ENCODE measurements at regions of chr17 and their contacts with region 1.

Region 1: DNA sequence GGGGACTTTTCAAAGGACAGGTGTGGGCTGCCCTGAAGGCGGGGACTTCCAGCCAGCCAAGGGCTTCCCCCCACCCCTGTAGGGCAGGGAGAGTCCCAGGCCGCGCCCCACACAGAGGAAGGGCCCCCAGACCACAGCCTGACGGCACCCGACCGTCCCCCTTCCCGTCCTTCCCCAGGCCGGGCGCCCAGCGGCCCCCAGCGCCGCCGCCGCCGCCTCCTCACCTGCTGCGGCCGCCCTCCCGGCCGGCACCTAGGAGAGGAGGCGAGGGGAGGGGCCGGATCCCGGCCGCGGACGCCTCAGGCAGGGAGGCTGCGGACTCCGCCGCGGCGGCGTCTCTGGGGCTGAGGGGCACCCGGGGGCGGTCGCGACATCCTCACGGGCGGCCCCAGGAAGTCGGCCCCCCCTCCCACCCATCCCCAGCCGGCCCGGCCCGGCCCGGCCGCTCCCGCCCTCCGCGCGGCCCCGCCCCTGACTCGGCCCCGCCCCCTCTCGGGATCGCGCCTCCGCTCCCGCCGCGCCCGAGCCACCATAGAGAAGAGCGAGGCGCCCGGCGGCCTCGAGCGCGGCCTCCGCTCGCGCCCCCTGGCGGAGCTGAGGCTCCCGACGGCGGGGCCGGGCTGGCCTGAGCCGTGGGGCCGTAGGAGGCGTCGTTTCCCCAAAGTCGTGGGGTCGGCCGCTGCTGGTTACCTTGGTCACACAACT is 25.5 kb upstream of the RFFL start:
- DNase-seq: peak; percentile 80 to 96 (median 89)
- ATAC-seq: peak; percentile 74
- H3K4me3 ChIP-seq: peak overlapping the region; percentile 92
- H3K4me3 Mint-ChIP-seq: peak overlapping the region; percentile 99
- H3K27ac ChIP-seq: peak overlapping the region; percentile 88 to 94
- H3K27ac Mint-ChIP-seq: peak overlapping the region; percentile 98
- H3K4me1 ChIP-seq: peaks cover 46% of the 10 kb centered on the region
- H3K4me1 Mint-ChIP-seq: peaks cover 58% of the 10 kb centered on the region
- H3K27me3 ChIP-seq: no peaks in the 10 kb centered on the region
- H3K27me3 Mint-ChIP-seq: no peaks in the 10 kb centered on the region
- CTCF ChIP-seq: peak; percentile 72

Region 2: GRCh38 chr17:34980681-34981537 is 108.1 kb before region 1 on chr17:
- CTCF ChIA-PET with region 1: interaction called, 6 read pairs
- POLR2A ChIA-PET with region 1: interaction called, 9 read pairs
- intact Hi-C with region 1: loop called (anchors 1 to 5 kb)
- DNase-seq: peak; percentile 38 to 91 (median 66)
- ATAC-seq: peak; percentile 80
- H3K4me3 ChIP-seq: peak overlapping the region; percentile 90
- H3K4me3 Mint-ChIP-seq: peak overlapping the region; percentile 94
- H3K27ac ChIP-seq: peak overlapping the region; percentile 92 to 97
- H3K27ac Mint-ChIP-seq: peak overlapping the region; percentile 88
- H3K4me1 ChIP-seq: peaks cover 26% of the 10 kb centered on the region
- H3K4me1 Mint-ChIP-seq: peaks cover 56% of the 10 kb centered on the region
- H3K27me3 ChIP-seq: no peaks in the 10 kb centered on the region
- H3K27me3 Mint-ChIP-seq: no peaks in the 10 kb centered on the region
- CTCF ChIP-seq: peak; percentile 56

Region 3: DNA sequence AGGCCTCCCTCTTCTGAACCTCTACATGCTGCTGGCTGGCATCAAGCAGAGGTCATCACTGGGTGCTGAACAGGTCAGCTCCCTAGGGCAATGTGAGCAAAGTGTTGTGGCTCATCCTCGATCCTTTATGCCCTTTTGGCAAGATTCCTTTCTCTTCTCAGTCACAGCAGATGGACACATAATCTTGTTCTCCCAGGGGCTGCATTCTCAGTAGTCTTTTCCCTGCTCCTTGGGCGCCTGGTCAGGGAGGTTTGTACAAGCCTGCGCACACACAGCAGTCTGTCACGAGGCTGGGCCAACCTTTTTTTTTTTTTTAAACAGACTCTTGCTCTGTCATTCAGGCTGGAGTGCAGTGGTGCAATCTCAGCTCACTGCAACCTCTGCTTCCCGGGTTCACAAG is 81.6 kb before region 1 on chr17:
- CTCF ChIA-PET with region 1: interaction called, 16 read pairs
- POLR2A ChIA-PET with region 1: interaction called, 5 read pairs
- intact Hi-C with region 1: no loop called
- DNase-seq: no peak
- ATAC-seq: no peak
- H3K4me3 ChIP-seq: no peak overlapping the region
- H3K4me3 Mint-ChIP-seq: no peak overlapping the region
- H3K27ac ChIP-seq: no peak overlapping the region
- H3K27ac Mint-ChIP-seq: peak overlapping the region; percentile 73
- H3K4me1 ChIP-seq: no peaks in the 10 kb centered on the region
- H3K4me1 Mint-ChIP-seq: peaks cover 6% of the 10 kb centered on the region
- H3K27me3 ChIP-seq: no peaks in the 10 kb centered on the region
- H3K27me3 Mint-ChIP-seq: no peaks in the 10 kb centered on the region
- CTCF ChIP-seq: no peak

Region 4: DNA sequence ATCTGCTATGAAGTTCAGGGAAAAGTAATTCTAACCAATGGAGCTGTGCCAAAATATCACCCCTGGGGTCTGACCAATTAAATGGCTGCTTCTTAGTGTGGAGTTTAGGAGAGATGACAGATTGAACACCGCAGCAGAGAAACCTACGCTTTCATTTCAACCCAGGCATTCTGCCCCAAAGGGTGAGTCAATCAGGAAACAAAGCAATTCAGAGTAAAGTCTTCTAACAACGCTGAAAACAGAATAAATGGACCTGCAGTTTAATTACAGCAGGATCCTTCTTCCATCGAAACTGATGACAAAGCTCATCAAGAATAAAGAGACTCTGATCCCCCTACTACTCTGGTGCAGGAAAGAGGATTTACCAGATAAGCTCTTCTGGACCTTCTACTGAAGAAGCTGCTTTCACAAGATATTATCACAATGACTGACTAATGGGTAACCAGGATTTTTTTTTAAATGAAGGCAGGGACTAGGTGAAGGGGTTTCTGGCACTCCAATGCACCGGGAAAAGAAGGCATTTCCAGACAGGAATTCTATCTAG is 42.2 kb before region 1 on chr17:
- CTCF ChIA-PET with region 1: interaction called, 10 read pairs
- POLR2A ChIA-PET with region 1: interaction called, 13 read pairs
- intact Hi-C with region 1: loop called (anchors 1 to 5 kb)
- DNase-seq: peak; percentile 28 to 87 (median 50)
- ATAC-seq: peak; percentile 74
- H3K4me3 ChIP-seq: peak overlapping the region; percentile 37
- H3K4me3 Mint-ChIP-seq: peak overlapping the region; percentile 78
- H3K27ac ChIP-seq: peak overlapping the region; percentile 76 to 82
- H3K27ac Mint-ChIP-seq: peak overlapping the region; percentile 93
- H3K4me1 ChIP-seq: peaks cover 90% of the 10 kb centered on the region
- H3K4me1 Mint-ChIP-seq: peaks cover 79% of the 10 kb centered on the region
- H3K27me3 ChIP-seq: no peaks in the 10 kb centered on the region
- H3K27me3 Mint-ChIP-seq: no peaks in the 10 kb centered on the region
- CTCF ChIP-seq: no peak

Region 5: DNA sequence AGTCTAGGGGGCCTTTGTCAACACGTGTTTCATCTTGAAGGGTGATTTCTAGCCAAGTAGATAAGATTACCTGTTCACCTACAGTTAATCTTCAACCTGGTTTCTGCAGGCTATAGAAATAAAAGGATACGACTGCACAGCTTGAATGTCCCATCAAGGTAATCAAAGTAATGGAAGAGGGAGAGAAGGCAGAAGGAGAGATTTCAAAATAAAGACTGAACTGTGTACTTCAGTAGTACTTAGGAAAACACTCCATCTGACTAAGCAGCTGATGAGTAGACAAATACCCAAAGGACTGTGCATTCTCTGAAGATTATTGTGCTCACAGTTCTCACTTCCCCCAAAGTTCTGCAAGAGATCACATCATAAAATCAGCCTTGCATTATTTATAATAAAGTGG is 19.7 kb before region 1 on chr17:
- CTCF ChIA-PET with region 1: interaction called, 27 read pairs
- POLR2A ChIA-PET with region 1: interaction called, 17 read pairs
- intact Hi-C with region 1: loop called (anchors 2 kb)
- DNase-seq: no peak
- ATAC-seq: no peak
- H3K4me3 ChIP-seq: no peak overlapping the region
- H3K4me3 Mint-ChIP-seq: no peak overlapping the region
- H3K27ac ChIP-seq: no peak overlapping the region
- H3K27ac Mint-ChIP-seq: peak overlapping the region; percentile 46
- H3K4me1 ChIP-seq: peaks cover 48% of the 10 kb centered on the region
- H3K4me1 Mint-ChIP-seq: peaks cover 80% of the 10 kb centered on the region
- H3K27me3 ChIP-seq: no peaks in the 10 kb centered on the region
- H3K27me3 Mint-ChIP-seq: no peaks in the 10 kb centered on the region
- CTCF ChIP-seq: no peak